SK-N-SH (cell line): ENCODE measurements at regions of chr2 and their contacts with region 1.

Region 1: DNA sequence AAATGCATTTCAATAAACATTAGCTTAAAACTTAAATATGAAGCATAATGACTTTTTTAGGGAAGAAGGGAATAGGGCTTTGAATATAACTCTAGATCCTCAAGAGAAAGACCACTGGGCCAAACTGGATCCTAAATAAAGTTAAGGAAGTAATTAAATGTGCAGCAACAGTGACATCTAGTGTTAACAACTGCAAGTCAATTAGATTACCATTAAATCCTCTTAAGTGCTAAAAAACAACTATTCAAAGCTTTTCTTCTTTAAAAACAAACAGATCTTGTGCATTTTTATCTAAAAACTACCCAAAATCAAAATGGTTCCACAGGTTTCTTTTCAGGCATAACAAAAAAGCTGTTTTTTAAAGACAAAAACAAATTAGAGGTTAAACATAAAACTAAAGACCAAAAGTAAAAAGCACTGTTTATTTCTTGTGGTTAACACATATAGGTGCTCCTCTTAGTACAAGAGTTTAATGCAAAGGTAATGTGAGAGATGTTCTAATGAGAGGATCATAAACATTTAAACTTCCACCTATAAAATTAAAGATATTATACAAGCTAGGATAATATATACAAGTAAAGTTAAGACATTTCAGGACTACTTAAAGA is 111.4 kb downstream of the THADA start:
- DNase-seq: peak; percentile 48
- H3K4me3 ChIP-seq: no peak overlapping the region
- H3K27ac ChIP-seq: peak overlapping the region; percentile 10 to 81; a peak in 3 of 4 replicates
- H3K4me1 ChIP-seq: peaks cover 0 to 15% of the 10 kb centered on the region in 2 experiments; a peak in 2 of 4 replicates
- H3K27me3 ChIP-seq: no peaks in the 10 kb centered on the region
- CTCF ChIP-seq: peak; percentile 86
- EP300 ChIP-seq: no peak
- RAD21 ChIP-seq: peak; percentile 94

Region 2: GRCh38 chr2:42935692-42936681 is 548.4 kb before region 1 on chr2:
- CTCF ChIA-PET with region 1: interaction called, 10 read pairs
- POLR2A ChIA-PET with region 1: no interaction called
- DNase-seq: no peak
- H3K4me3 ChIP-seq: no peak overlapping the region
- H3K27ac ChIP-seq: no peak overlapping the region
- H3K4me1 ChIP-seq: peaks cover 0 to 22% of the 10 kb centered on the region in 2 experiments; a peak in 1 of 4 replicates
- H3K27me3 ChIP-seq: no peaks in the 10 kb centered on the region
- CTCF ChIP-seq: no peak
- EP300 ChIP-seq: no peak
- RAD21 ChIP-seq: no peak

Region 3: DNA sequence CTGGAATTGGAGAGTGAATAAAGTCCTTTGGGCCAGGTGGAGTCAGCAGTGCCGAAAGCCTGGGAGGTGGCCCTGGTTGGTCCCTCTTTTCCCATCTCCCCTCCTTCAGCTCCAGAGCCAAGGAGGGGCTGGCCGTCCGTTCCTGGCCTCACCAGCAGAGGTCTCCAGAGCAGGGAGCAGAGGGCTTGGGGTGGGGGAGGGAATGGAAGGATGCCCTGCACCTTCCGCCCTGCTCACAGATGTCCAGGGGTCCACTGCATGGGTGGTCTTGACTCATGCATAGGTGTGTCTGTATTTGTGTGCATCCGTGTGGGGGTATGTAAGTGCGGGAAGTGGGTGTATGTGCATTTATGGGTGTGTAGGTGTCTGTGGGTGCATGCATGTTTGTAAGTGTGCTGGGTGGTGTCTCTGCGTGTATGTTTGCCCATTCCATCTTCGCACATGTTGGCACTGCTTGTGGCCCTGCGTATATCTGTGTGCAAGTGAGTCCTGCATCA is 459.9 kb before region 1 on chr2:
- CTCF ChIA-PET with region 1: interaction called, 31 read pairs
- POLR2A ChIA-PET with region 1: no interaction called
- DNase-seq: peak; percentile 96
- H3K4me3 ChIP-seq: no peak overlapping the region
- H3K27ac ChIP-seq: peak overlapping the region in 1 of 2 experiments; percentile 52; a peak in 1 of 4 replicates
- H3K4me1 ChIP-seq: peaks cover 0 to 14% of the 10 kb centered on the region in 2 experiments; a peak in 1 of 4 replicates
- H3K27me3 ChIP-seq: no peaks in the 10 kb centered on the region
- CTCF ChIP-seq: peak; percentile 97
- EP300 ChIP-seq: peak in 1 of 2 experiments; percentile 33; a peak in 1 of 4 replicates
- RAD21 ChIP-seq: peak; percentile 97

Region 4: GRCh38 chr2:43269074-43269572 is 215.3 kb before region 1 on chr2:
- CTCF ChIA-PET with region 1: interaction called, 21 read pairs
- POLR2A ChIA-PET with region 1: no interaction called
- DNase-seq: peak; percentile 77
- H3K4me3 ChIP-seq: no peak overlapping the region
- H3K27ac ChIP-seq: peak overlapping the region; percentile 54 to 99
- H3K4me1 ChIP-seq: peaks cover 31 to 73% of the 10 kb centered on the region in 2 experiments
- H3K27me3 ChIP-seq: no peaks in the 10 kb centered on the region
- CTCF ChIP-seq: peak; percentile 38; the same call in 1 of the 2 replicates
- EP300 ChIP-seq: peak; percentile 60 to 73; a peak in 2 of 4 replicates
- RAD21 ChIP-seq: peak; percentile 47

Region 5: GRCh38 chr2:43333656-43334144 is 150.7 kb before region 1 on chr2:
- CTCF ChIA-PET with region 1: interaction called, 14 read pairs
- POLR2A ChIA-PET with region 1: no interaction called
- DNase-seq: no peak
- H3K4me3 ChIP-seq: no peak overlapping the region
- H3K27ac ChIP-seq: peak overlapping the region; percentile 8 to 56; a peak in 3 of 4 replicates
- H3K4me1 ChIP-seq: peaks cover 9 to 40% of the 10 kb centered on the region in 2 experiments; a peak in 3 of 4 replicates
- H3K27me3 ChIP-seq: no peaks in the 10 kb centered on the region
- CTCF ChIP-seq: no peak
- EP300 ChIP-seq: no peak
- RAD21 ChIP-seq: no peak

Region 6: GRCh38 chr2:43495727-43496126 is 11.3 kb after region 1 on chr2:
- CTCF ChIA-PET with region 1: interaction called, 21 read pairs
- POLR2A ChIA-PET with region 1: interaction called, 3 read pairs
- DNase-seq: no peak
- H3K4me3 ChIP-seq: no peak overlapping the region
- H3K27ac ChIP-seq: no peak overlapping the region
- H3K4me1 ChIP-seq: peaks cover 0 to 3% of the 10 kb centered on the region in 2 experiments; a peak in 1 of 4 replicates
- H3K27me3 ChIP-seq: no peaks in the 10 kb centered on the region
- CTCF ChIP-seq: no peak
- EP300 ChIP-seq: no peak
- RAD21 ChIP-seq: no peak